ENCODE measurements at regions of chr10 and their contacts with region 1.

Region 1: GRCh38 chr10:102167861-102168260 is 15.7 kb downstream of the NOLC1 start:
- DNase-seq: no peak
- H3K4me3 ChIP-seq: no peak overlapping the region
- H3K27ac ChIP-seq: no peak overlapping the region
- H3K4me1 ChIP-seq: no peaks in the 10 kb centered on the region
- H3K27me3 ChIP-seq: no peaks in the 10 kb centered on the region
- CTCF ChIP-seq: no peak
- EP300 ChIP-seq: no peak
- RAD21 ChIP-seq: no peak

Region 2: GRCh38 chr10:102040305-102041050 is 127.4 kb before region 1 on chr10:
- CTCF ChIA-PET with region 1: no interaction called
- POLR2A ChIA-PET with region 1: no interaction called
- DNase-seq: no peak
- H3K4me3 ChIP-seq: no peak overlapping the region
- H3K27ac ChIP-seq: no peak overlapping the region
- H3K4me1 ChIP-seq: no peaks in the 10 kb centered on the region
- H3K27me3 ChIP-seq: no peaks in the 10 kb centered on the region
- CTCF ChIP-seq: no peak
- EP300 ChIP-seq: no peak
- RAD21 ChIP-seq: no peak

Region 3: GRCh38 chr10:102188298-102188940 is 20.6 kb after region 1 on chr10:
- CTCF ChIA-PET with region 1: interaction called, 14 read pairs
- POLR2A ChIA-PET with region 1: no interaction called
- DNase-seq: no peak
- H3K4me3 ChIP-seq: no peak overlapping the region
- H3K27ac ChIP-seq: no peak overlapping the region
- H3K4me1 ChIP-seq: no peaks in the 10 kb centered on the region; a peak in 1 of 4 replicates
- H3K27me3 ChIP-seq: no peaks in the 10 kb centered on the region
- CTCF ChIP-seq: no peak
- EP300 ChIP-seq: no peak
- RAD21 ChIP-seq: no peak

Region 4: GRCh38 chr10:102220612-102221011 is 52.8 kb after region 1 on chr10:
- CTCF ChIA-PET with region 1: interaction called, 32 read pairs
- POLR2A ChIA-PET with region 1: no interaction called
- DNase-seq: no peak
- H3K4me3 ChIP-seq: no peak overlapping the region
- H3K27ac ChIP-seq: no peak overlapping the region
- H3K4me1 ChIP-seq: peaks cover 0 to under 1% of the 10 kb centered on the region in 2 experiments; a peak in 2 of 4 replicates
- H3K27me3 ChIP-seq: no peaks in the 10 kb centered on the region
- CTCF ChIP-seq: no peak
- EP300 ChIP-seq: no peak
- RAD21 ChIP-seq: no peak

Region 5: DNA sequence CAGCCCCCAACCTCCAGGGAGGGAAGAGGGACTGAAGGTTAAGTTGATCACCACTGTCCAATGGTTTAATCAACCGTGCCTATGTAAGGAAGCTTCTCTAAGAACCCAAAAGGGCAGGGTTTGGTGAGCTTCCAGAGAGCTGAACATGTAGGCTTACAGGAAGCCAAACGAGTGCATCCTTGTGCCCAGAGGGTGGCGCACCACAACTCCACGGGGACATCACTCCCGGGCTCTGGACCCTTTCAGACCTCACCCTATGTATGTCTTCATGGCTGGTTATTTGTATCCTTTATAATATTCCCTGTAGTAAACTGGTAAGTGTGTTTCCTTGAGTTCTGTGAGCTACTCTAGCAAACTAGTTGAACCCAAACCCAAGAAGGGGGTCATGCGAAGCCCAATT is 216.2 kb after region 1 on chr10:
- CTCF ChIA-PET with region 1: interaction called, 15 read pairs
- POLR2A ChIA-PET with region 1: no interaction called
- DNase-seq: no peak
- H3K4me3 ChIP-seq: no peak overlapping the region
- H3K27ac ChIP-seq: no peak overlapping the region
- H3K4me1 ChIP-seq: no peaks in the 10 kb centered on the region; a peak in 1 of 4 replicates
- H3K27me3 ChIP-seq: no peaks in the 10 kb centered on the region
- CTCF ChIP-seq: peak; percentile 18; the same call in 1 of the 2 replicates
- EP300 ChIP-seq: no peak
- RAD21 ChIP-seq: no peak

Region 6: DNA sequence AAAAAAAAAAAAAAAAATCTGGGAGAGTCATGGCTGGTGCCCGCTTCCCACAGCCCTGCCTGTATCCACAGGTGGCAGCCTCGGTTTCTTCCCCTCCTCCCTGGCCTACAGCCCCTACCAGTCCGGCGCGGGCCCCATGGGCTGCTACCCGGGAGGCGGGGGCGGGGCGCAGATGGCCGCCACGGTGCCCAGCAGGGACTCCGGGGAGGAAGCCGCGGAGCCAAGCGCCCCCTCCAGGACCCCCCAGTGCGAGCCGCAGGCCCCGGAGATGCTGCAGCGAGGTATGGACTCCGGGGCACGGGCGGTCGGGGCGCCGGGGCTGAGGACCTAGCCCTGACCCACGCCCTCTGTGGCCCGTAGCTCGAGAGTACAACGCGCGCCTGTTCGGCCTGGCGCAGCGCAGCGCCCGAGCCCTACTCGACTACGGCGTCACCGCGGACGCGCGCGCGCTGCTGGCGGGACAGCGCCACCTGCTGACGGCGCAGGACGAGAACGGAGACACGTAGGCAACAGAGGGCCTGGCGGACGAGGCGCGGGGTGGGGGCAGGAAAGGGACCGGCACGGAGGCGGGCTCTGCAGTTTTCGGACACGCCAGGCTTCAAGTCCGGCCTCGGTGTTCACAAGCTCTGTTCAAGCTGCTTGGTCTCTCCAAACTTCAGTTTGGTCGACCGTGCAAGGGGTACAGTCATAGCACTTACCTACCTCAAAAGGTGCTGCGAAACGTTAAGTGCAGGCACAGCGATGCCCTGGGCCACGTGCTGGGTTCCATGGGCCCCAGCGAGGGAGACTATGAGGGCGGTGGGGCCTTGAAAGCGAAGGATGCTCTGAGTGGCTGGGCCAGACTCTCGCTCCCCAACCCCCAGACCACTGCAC is 231.6 kb after region 1 on chr10:
- CTCF ChIA-PET with region 1: interaction called, 40 read pairs
- POLR2A ChIA-PET with region 1: no interaction called
- DNase-seq: peak; percentile 95
- H3K4me3 ChIP-seq: peak overlapping the region; percentile 49 to 64
- H3K27ac ChIP-seq: peak overlapping the region in 1 of 2 experiments; percentile 71; a peak in 1 of 4 replicates
- H3K4me1 ChIP-seq: peaks cover 0 to 23% of the 10 kb centered on the region in 2 experiments; a peak in 1 of 4 replicates
- H3K27me3 ChIP-seq: no peaks in the 10 kb centered on the region
- CTCF ChIP-seq: peak; percentile 87
- EP300 ChIP-seq: no peak
- RAD21 ChIP-seq: peak; percentile 55

Region 7: DNA sequence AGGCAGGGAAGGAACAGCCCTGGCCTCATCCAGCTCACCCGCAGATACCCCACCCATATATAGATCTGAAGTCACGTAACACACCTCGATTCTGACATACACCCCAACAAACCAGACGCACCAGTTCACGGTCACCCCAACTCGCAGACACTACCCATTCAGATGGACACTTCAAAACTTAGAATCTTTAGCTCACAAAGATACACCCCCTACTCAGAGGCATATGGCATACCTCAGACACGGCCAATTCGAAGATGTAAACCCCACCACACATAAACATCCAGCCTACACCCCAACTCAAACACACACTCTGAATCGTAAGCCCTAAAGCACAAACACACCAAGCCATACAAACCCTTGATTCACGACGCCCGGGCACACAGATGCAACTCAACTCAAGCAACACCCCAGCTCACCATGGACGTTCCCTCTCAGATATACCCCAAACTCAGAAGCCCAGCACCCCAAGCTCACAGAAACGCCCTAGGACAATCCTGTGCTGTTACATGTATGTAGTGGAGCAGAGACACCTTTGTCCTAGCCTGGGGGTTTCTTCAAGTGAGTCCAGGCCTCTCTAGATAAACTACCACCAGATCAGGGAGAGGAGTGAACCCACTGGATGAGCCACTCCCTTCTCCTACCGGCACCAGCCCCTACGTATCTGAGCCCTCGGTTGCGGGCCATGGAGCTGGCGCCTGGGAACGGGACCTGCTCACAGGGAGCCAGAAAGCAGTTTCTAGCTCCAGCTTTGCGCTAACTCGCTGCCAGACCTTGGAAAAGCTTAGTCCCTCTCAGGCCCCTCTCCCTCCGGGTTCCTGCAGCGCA is 242.0 kb after region 1 on chr10:
- CTCF ChIA-PET with region 1: no interaction called
- POLR2A ChIA-PET with region 1: no interaction called
- DNase-seq: peak; percentile 28
- H3K4me3 ChIP-seq: peak overlapping the region; percentile 32 to 51; a peak in 3 of 4 replicates
- H3K27ac ChIP-seq: peak overlapping the region in 1 of 2 experiments; percentile 56; a peak in 2 of 4 replicates
- H3K4me1 ChIP-seq: peaks cover 0 to 31% of the 10 kb centered on the region in 2 experiments; a peak in 2 of 4 replicates
- H3K27me3 ChIP-seq: no peaks in the 10 kb centered on the region
- CTCF ChIP-seq: no peak
- EP300 ChIP-seq: no peak
- RAD21 ChIP-seq: no peak